ENCODE measurements at regions of chr9 and their contacts with region 1.

Region 1: DNA sequence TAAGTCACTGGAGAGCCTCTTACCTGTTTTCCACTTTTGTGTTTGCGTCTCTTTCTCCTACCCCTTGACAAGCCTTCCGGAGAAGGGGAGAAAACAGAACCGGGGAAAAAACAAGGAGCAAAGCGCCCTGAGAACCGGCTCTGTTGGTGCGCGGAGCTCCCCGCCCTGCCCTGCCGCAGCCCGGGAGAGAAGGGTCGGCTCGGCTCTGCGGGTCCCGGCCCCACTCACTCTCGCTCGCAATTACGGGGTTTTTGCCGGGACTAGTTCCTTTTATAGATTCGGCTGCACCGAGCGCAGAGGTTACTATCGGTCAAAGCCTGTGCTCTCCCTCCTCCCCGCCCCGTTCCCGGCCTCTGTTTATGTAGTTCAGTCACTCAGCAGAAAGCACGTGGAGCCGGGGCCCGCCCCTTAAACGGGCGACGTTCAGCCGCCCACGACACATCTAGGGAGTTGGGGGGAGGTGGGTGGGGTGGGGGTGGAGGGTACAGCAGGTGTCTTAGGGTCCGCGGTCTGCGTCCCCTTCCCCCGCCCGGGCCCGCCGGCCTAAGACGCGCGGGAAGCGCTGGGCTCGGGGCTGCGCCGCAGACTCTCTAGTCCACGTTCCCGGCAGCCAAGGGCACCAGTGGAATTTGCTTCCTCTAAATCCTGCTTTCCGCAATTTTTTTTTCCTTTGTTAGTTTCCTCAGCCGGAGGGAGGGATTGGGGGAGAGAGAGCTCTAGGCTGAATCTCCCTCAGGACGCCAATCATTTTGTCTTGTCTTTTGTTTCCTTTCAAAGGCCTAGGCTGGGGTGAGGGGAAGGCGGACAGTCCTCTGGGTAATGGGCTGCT is at the start of gene ABCA1:
- DNase-seq: peak; percentile 87
- ATAC-seq: peak; percentile 55
- H3K4me3 Mint-ChIP-seq: peak within 1 kb of the TSS; percentile 95
- H3K27ac Mint-ChIP-seq: peak within 1 kb of the TSS; percentile 94
- H3K4me1 Mint-ChIP-seq: peaks cover 27% of the 10 kb centered on the region
- H3K27me3 Mint-ChIP-seq: peaks cover 20% of the 10 kb centered on the region
- CTCF ChIP-seq: no peak
- total RNA-seq, gene ABCA1: 4.6 to 7.8 TPM (median 5.8 TPM) in 3 replicates

Region 2: DNA sequence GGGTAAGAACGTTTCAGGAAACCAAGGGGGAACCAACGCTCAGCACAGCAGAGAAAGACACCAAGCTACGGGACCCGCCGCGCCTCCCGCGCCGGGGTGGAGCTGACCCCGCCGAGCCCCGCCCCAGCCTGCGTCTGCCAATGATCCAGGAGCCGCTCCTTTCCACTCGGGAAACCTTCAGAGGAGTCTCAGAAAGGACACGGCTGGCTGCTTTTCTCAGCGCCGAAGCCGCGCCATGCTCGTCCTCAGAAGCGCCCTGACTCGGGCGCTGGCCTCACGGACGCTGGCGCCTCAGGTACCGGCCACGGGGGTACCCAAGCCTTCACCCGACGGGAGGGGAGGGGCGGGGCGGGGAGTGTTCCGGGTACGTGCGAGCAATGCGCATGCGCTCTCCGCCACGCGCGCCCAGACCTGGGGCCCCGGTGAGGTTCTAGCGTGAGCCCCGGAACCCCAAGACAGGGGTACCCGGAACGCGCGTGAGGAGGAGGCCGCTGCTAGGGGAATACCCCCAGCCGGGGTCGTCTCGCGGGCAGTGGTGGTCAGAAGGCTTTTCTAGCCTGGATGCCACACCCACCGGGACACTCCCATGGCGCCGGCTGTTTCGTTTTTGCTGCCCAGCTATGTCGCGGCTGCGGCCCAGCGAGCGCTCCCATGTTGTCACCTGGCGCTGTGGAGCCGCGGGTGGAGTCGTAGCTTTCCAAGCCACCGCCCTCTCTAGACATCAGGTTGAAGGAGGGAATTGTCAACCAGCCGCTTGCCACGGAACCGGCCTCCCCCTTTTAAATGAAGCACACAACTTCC is 180.4 kb before region 1 on chr9 and contains the start of gene NIPSNAP3A:
- CTCF ChIA-PET with region 1: no interaction called
- POLR2A ChIA-PET with region 1: no interaction called
- DNase-seq: peak; percentile 77
- ATAC-seq: peak; percentile 88
- H3K4me3 Mint-ChIP-seq: peak within 1 kb of the TSS; percentile 97
- H3K27ac Mint-ChIP-seq: peak within 1 kb of the TSS; percentile 93; the same call in 1 of the 2 replicates
- H3K4me1 Mint-ChIP-seq: peaks cover 25% of the 10 kb centered on the region
- H3K27me3 Mint-ChIP-seq: no peaks in the 10 kb centered on the region; the same call in 1 of the 2 replicates
- CTCF ChIP-seq: no peak
- total RNA-seq, gene NIPSNAP3A: 7.2 to 10.3 TPM (median 10.3 TPM) in 3 replicates

Region 3: GRCh38 chr9:104868687-104869404 is 59.3 kb before region 1 on chr9:
- CTCF ChIA-PET with region 1: interaction called, 54 read pairs
- POLR2A ChIA-PET with region 1: interaction called, 33 read pairs
- DNase-seq: peak; percentile 66
- ATAC-seq: peak; percentile 98
- H3K4me3 Mint-ChIP-seq: no peak overlapping the region
- H3K27ac Mint-ChIP-seq: no peak overlapping the region
- H3K4me1 Mint-ChIP-seq: peaks cover 59% of the 10 kb centered on the region
- H3K27me3 Mint-ChIP-seq: peaks cover 2% of the 10 kb centered on the region; the same call in 1 of the 2 replicates
- CTCF ChIP-seq: no peak

Region 4: DNA sequence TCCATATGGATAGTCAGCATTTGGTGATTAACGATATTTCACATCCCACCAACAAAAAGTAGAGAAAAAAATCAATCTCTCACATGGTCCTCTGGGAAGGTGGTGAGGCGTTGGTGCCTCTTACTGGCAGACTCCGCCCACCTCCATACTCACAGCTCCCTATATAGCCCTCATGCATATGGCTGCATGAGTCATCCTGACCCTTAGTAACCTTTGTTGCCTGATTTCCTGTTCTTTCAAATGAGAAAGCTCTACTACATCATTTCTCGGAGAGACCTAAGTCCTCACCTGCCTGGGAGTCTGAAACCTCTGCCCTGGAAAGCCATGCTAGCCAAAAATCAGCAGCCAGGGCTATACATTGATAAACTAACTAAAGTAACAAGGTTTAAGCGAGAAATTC is 33.1 kb after region 1 on chr9:
- CTCF ChIA-PET with region 1: interaction called, 7 read pairs
- POLR2A ChIA-PET with region 1: interaction called, 57 read pairs
- DNase-seq: peak; percentile 56
- ATAC-seq: peak; percentile 99
- H3K4me3 Mint-ChIP-seq: peak overlapping the region; percentile 27; the same call in 1 of the 2 replicates
- H3K27ac Mint-ChIP-seq: peak overlapping the region; percentile 90; the same call in 1 of the 2 replicates
- H3K4me1 Mint-ChIP-seq: peaks cover 40% of the 10 kb centered on the region
- H3K27me3 Mint-ChIP-seq: no peaks in the 10 kb centered on the region
- CTCF ChIP-seq: no peak

Region 5: GRCh38 chr9:104968025-104968982 is 40.2 kb after region 1 on chr9:
- CTCF ChIA-PET with region 1: interaction called, 21 read pairs
- POLR2A ChIA-PET with region 1: interaction called, 57 read pairs
- DNase-seq: peak; percentile 86
- ATAC-seq: peak; percentile 84
- H3K4me3 Mint-ChIP-seq: peak overlapping the region; percentile 95
- H3K27ac Mint-ChIP-seq: peak overlapping the region; percentile 63
- H3K4me1 Mint-ChIP-seq: peaks cover 33% of the 10 kb centered on the region
- H3K27me3 Mint-ChIP-seq: peaks cover 3% of the 10 kb centered on the region; the same call in 1 of the 2 replicates
- CTCF ChIP-seq: no peak

Region 6: GRCh38 chr9:104991144-104991953 is 63.2 kb after region 1 on chr9:
- CTCF ChIA-PET with region 1: interaction called, 12 read pairs
- POLR2A ChIA-PET with region 1: interaction called, 77 read pairs
- DNase-seq: peak; percentile 86
- ATAC-seq: peak; percentile 52
- H3K4me3 Mint-ChIP-seq: peak overlapping the region; percentile 80
- H3K27ac Mint-ChIP-seq: peak overlapping the region; percentile 92
- H3K4me1 Mint-ChIP-seq: peaks cover 44% of the 10 kb centered on the region
- H3K27me3 Mint-ChIP-seq: peaks cover 54% of the 10 kb centered on the region
- CTCF ChIP-seq: no peak

Measured in WTC11 (cell line).